ENCODE measurements at regions of chr9 and their contacts with region 1.

Region 1: GRCh38 chr9:130997925-130998596 is 10.9 kb upstream of the LAMC3 start:
- H3K4me3 ChIP-seq: no peak overlapping the region
- H3K27ac ChIP-seq: no peak overlapping the region
- H3K4me1 ChIP-seq: no peaks in the 10 kb centered on the region
- CTCF ChIP-seq: peak; percentile 96

Region 2: DNA sequence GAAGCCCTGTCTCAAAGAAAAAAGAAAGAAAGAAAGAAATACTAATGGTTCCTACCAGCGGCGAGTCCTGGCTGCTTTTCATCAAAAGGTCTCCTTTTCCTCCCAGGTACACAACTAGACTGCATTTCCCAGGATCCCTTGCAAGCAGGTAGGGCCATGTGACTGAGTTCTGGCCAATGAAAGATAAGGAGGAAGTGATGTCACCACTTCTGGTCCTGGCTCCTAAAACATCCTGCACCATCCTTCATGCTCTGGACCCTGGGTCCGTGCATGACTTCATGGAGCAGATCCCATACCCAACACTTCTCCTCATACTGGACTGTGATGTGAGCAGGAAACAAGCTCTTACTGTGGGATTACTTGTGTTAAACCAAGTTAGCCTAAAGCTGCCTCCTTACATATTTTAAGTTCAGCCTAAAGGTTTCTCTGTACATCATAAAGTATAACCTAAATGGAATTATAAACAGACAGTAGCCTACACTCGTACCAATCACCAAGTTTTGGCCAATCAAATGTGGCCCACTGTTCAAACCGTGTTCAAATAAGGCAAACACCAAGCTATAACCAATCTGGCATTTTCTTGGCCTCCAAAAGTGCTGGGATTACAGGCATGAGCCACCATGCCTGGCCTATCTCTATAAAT is 448.8 kb before region 1 on chr9:
- CTCF ChIA-PET with region 1: no interaction called
- POLR2A ChIA-PET with region 1: no interaction called
- H3K4me3 ChIP-seq: no peak overlapping the region
- H3K27ac ChIP-seq: no peak overlapping the region
- H3K4me1 ChIP-seq: no peaks in the 10 kb centered on the region
- CTCF ChIP-seq: no peak

Region 3: GRCh38 chr9:130599625-130600024 is 398.4 kb before region 1 on chr9:
- CTCF ChIA-PET with region 1: no interaction called
- POLR2A ChIA-PET with region 1: no interaction called
- H3K4me3 ChIP-seq: no peak overlapping the region
- H3K27ac ChIP-seq: no peak overlapping the region
- H3K4me1 ChIP-seq: no peaks in the 10 kb centered on the region
- CTCF ChIP-seq: no peak

Region 4: GRCh38 chr9:130893341-130894101 is 104.5 kb before region 1 on chr9:
- CTCF ChIA-PET with region 1: interaction called, 20 read pairs
- POLR2A ChIA-PET with region 1: no interaction called
- H3K4me3 ChIP-seq: no peak overlapping the region
- H3K27ac ChIP-seq: no peak overlapping the region
- H3K4me1 ChIP-seq: no peaks in the 10 kb centered on the region
- CTCF ChIP-seq: peak; percentile 53

Region 5: GRCh38 chr9:130927995-130928900 is 69.8 kb before region 1 on chr9:
- CTCF ChIA-PET with region 1: interaction called, 21 read pairs
- POLR2A ChIA-PET with region 1: no interaction called
- H3K4me3 ChIP-seq: no peak overlapping the region
- H3K27ac ChIP-seq: peak overlapping the region; percentile 19; the same call in 1 of the 2 replicates
- H3K4me1 ChIP-seq: peaks cover 3% of the 10 kb centered on the region; the same call in 1 of the 2 replicates
- CTCF ChIP-seq: no peak

Region 6: DNA sequence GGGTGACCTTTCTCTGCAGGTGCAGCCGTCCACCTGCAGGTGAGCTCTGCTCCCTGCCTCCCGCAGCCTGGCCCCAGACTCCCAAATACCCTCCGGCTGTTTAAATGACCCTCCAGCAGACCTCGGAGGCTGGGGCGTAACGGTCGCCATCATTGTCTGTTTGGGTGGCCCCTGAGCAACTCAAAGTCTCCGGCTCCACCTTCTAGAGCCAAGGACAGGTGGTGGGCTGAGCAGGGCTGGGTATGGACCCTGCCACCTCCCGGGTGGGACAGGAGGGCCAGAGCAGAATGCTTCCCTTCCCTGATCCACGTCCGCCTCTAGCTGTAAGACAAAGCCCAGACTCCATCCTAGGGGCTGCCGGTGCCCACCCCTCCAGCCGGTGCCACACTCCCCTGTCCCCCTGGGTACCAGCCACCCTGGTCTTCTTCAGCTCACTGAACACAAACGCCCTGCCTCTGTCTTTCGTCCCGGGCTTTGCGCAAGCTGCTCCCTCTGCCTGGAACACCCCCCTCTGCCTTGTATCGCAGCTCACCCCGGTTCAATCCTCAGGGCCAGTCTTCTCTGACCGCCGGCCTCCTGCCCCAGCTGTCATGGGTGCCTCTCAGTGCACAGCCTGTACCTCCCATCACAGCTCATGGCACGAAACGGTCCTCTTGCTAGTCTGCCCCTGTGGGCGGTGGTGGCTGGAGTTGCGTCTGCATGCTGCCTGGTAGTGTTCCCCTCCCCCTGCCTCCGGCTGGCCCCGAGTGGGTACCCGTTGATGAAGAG is 24.7 kb before region 1 on chr9:
- CTCF ChIA-PET with region 1: interaction called, 19 read pairs
- POLR2A ChIA-PET with region 1: no interaction called
- H3K4me3 ChIP-seq: no peak overlapping the region
- H3K27ac ChIP-seq: no peak overlapping the region
- H3K4me1 ChIP-seq: no peaks in the 10 kb centered on the region
- CTCF ChIP-seq: no peak

Region 7: DNA sequence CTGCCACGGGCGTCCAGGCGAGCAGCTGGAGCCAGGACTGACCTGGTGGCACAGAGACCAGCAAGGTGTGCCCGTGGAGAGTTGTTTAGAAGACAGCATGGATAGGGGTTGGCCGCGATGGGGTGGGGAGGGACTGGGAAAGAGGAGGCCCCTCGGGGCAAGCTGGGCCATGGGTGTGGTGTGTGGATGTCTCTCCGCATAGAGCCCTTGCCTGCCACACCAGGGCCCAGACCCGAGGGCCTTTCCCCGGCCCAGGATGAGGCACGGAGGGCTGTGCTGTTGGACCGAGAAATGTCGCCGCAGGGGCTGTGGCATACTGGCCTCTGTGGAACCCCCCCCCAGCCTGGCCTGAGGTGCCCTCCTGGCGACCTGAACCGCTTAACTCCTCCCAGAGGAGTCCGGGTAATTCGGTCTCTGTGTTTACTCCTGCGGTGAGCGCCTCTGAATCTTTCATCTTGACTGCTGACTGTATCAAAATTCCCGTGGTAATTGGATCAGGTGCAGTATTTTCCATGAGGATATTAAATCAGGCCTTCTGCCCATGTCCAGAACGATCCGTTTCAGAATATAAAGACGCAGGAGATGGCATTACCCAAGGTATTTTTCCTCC is 11.6 kb before region 1 on chr9:
- CTCF ChIA-PET with region 1: interaction called, 41 read pairs
- POLR2A ChIA-PET with region 1: interaction called, 3 read pairs
- H3K4me3 ChIP-seq: no peak overlapping the region
- H3K27ac ChIP-seq: no peak overlapping the region
- H3K4me1 ChIP-seq: no peaks in the 10 kb centered on the region
- CTCF ChIP-seq: no peak

Region 8: GRCh38 chr9:131227112-131227958 is 229.3 kb after region 1 on chr9:
- CTCF ChIA-PET with region 1: no interaction called
- POLR2A ChIA-PET with region 1: no interaction called
- H3K4me3 ChIP-seq: no peak overlapping the region
- H3K27ac ChIP-seq: no peak overlapping the region
- H3K4me1 ChIP-seq: peaks cover 15% of the 10 kb centered on the region
- CTCF ChIP-seq: no peak